ENCODE measurements at regions of chr19 and their contacts with region 1.

Region 1: DNA sequence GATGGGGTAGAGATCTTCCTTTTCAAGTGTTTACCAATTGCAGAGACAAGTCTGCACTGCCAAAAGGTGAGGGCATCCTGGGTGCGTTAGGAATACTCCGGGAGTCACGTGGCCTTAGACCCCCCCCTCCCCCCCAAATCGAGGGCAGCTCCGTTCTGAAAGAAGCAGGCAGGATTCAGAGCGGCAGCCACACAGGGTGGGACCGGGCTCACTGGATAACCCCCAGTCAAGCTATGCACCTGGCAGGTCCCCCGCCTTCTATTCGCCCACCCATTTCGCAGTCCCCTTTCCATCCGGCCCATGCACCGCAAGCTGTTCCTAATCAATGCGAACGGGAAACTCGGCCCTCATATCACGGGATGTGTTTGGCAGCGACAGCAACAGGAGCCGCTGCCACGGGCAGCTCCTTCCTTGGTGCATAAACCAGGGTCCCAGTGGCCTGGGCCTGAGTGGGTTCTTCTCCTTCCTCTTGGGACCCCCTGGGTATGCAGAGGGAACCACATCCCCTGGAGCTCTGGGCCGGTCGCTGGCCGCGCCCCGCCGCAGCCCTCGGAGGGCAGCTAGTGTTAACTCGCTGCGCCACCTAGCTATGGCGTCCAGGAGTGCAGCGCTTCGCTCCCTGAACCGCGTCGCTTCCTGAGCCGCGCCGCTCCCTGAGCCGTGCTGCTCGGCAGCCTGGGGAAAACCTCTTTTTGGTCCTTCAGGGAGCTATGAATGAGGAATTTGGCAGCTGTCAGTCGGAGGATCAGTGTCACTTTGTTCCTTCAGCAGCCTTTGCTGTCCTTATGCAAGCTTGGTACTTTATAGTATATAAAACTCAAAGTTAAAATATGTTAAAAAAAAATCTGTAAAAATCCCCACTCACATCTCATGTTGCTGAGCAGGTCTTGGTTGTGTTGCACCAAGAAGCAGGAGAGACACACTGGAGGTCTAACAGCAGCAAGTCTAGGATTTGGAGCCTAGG is 41.4 kb downstream of the LYL1 start:
- DNase-seq: peak; percentile 81 to 93 (median 90)
- ATAC-seq: peak; percentile 51 to 80 (median 70)
- H3K4me3 ChIP-seq: peak overlapping the region in 11 of 12 donors; percentile 20 to 58 (median 48)
- H3K27ac ChIP-seq: peak overlapping the region; percentile 67 to 98 (median 96)
- H3K4me1 ChIP-seq: peaks cover 32 to 100% (median 99%) of the 10 kb centered on the region in 12 donors
- H3K27me3 ChIP-seq: no peaks in the 10 kb centered on the region
- CTCF ChIP-seq: peak; percentile 94 to 100 (median 98)
- POLR2A ChIP-seq: no peak

Region 2: DNA sequence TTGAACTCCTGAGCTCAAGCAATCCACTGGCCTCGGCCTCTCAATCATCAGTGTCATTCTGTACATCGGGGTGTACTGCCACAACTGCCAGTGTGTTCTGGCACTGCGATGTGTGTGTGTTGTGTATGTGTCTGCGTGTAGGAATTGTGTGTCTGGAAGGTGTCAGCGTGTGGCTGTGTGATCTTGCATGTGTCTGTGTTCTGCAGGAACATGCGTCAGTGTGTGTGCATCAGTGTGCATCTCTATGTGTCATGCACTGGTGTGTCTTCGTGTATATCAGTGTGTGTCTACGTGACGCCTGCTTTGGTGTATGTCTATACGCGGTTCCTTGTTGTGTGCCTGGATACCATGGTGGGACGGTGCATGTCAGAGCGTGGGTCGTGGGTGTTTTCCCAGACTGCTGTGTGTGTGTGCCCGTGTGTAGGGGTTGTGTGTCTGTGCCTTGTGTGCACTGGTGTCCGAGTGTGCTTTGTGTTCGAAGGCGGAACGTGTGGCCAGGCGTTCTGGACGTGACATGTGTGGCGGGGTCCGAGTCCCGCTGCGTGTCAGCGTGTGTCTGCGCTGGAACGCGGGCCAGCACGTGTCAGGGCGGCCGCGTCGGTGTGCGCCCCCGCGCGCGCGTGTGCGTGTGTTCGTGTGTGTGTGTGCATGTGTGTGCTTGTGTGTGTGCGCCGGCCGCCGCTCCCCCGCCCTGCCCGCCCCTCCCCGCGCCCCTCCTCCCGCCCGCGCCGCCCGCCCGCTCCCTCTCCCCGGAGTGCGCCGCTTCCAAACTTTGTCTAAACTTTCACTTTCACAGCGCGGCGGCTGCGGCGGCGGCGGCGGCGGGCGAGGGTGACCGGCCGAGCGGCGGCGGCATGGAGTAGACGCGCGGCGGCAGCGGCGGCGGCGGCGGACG is 66.3 kb before region 1 on chr19 and contains the start of gene NFIX:
- intact Hi-C with region 1: loop called in 5 of 10 experiments (anchors 2 to 5 kb)
- DNase-seq: peak; percentile 73 to 83 (median 82)
- ATAC-seq: peak; percentile 10 to 47 (median 41)
- H3K4me3 ChIP-seq: peak within 1 kb of the TSS; percentile 72 to 90 (median 80)
- H3K27ac ChIP-seq: peak within 1 kb of the TSS; percentile 53 to 97 (median 88)
- H3K4me1 ChIP-seq: peaks cover 0 to 27% (median 16%) of the 10 kb centered on the region in 12 donors
- H3K27me3 ChIP-seq: peaks cover 0 to 5% (median 0%) of the 10 kb centered on the region in 9 donors
- CTCF ChIP-seq: peak in 1 of 12 donors; percentile 8
- POLR2A ChIP-seq: no peak
- total RNA-seq, gene NFIX: 81.4 to 147 (median 122) TPM

Region 3: GRCh38 chr19:13022859-13023636 is 38.2 kb before region 1 on chr19:
- intact Hi-C with region 1: loop called in 8 of 10 experiments (anchors 5 kb)
- DNase-seq: peak; percentile 88 to 93 (median 90)
- ATAC-seq: peak; percentile 83 to 89 (median 84)
- H3K4me3 ChIP-seq: peak overlapping the region in 11 of 12 donors; percentile 24 to 64 (median 50)
- H3K27ac ChIP-seq: peak overlapping the region; percentile 86 to 97 (median 93)
- H3K4me1 ChIP-seq: peaks cover 8 to 97% (median 81%) of the 10 kb centered on the region in 12 donors
- H3K27me3 ChIP-seq: peaks cover 0 to 11% (median 0%) of the 10 kb centered on the region in 9 donors
- CTCF ChIP-seq: peak in 2 of 12 donors; percentile 2 to 3
- POLR2A ChIP-seq: no peak

Region 4: GRCh38 chr19:13083627-13084026 is 22.4 kb after region 1 on chr19:
- intact Hi-C with region 1: loop called in 1 of 10 experiments (anchors 1 kb)
- DNase-seq: no peak
- ATAC-seq: no peak
- H3K4me3 ChIP-seq: no peak overlapping the region
- H3K27ac ChIP-seq: peak overlapping the region in 2 of 12 donors; percentile 60 to 63
- H3K4me1 ChIP-seq: peaks cover 4 to 54% (median 35%) of the 10 kb centered on the region in 12 donors
- H3K27me3 ChIP-seq: no peaks in the 10 kb centered on the region
- CTCF ChIP-seq: no peak
- POLR2A ChIP-seq: no peak

Measured in heart left ventricle (tissue), 16 donors.